WTC11 (cell line): ENCODE measurements at regions of chr19 and their contacts with region 1.

Region 1: GRCh38 chr19:1825909-1826556 is 14.0 kb upstream of the ATP8B3 start:
- DNase-seq: peak; percentile 93
- ATAC-seq: peak; percentile 81
- H3K4me3 Mint-ChIP-seq: no peak overlapping the region
- H3K27ac Mint-ChIP-seq: peak overlapping the region; percentile 92
- H3K4me1 Mint-ChIP-seq: peaks cover 6% of the 10 kb centered on the region; the same call in 1 of the 2 replicates
- H3K27me3 Mint-ChIP-seq: no peaks in the 10 kb centered on the region
- CTCF ChIP-seq: peak; percentile 85

Region 2: GRCh38 chr19:1551068-1552040 is 274.7 kb before region 1 on chr19:
- CTCF ChIA-PET with region 1: interaction called, 31 read pairs
- POLR2A ChIA-PET with region 1: no interaction called
- DNase-seq: no peak
- ATAC-seq: no peak
- H3K4me3 Mint-ChIP-seq: no peak overlapping the region
- H3K27ac Mint-ChIP-seq: no peak overlapping the region
- H3K4me1 Mint-ChIP-seq: no peaks in the 10 kb centered on the region
- H3K27me3 Mint-ChIP-seq: peaks cover 3% of the 10 kb centered on the region; the same call in 1 of the 2 replicates
- CTCF ChIP-seq: no peak

Region 3: GRCh38 chr19:1760020-1760419 is 66.0 kb before region 1 on chr19:
- CTCF ChIA-PET with region 1: interaction called, 10 read pairs
- POLR2A ChIA-PET with region 1: no interaction called
- DNase-seq: no peak
- ATAC-seq: peak; percentile 27
- H3K4me3 Mint-ChIP-seq: no peak overlapping the region; the same call in 1 of the 2 replicates
- H3K27ac Mint-ChIP-seq: no peak overlapping the region
- H3K4me1 Mint-ChIP-seq: peaks cover 15% of the 10 kb centered on the region
- H3K27me3 Mint-ChIP-seq: peaks cover 100% of the 10 kb centered on the region
- CTCF ChIP-seq: no peak

Region 4: DNA sequence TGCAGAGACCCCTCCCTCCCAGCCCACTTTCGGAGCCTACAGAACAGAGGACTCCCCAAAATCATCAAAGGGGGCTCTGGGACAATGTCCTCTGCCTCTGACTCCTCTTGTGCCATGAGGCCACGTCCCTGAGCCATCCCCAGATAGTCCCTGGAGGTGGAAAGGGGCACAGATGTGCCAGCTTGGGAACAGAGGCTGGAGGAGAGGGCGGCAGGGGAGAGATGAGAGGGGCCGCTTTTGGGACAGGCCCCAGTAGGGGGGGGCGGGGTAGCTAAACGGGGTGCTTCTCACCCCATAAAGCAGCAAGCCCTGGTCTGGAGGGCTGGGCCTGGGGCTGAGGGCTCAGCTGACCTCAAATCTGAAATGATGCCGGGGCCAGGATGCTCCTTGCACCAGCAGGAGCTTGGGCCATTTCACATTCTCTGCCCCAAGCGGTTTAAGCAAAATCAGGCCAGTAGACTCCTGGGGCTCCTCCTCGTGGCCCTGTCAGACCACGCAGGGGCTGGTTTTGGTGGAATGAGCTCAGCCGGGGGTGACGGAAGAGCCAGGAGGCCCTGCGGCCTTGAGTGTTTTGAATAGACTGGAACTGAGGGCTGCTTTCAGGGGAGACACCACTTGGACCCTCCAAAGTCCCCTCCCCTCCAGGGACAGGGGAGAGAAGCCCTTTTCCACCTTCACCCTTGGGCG is 45.6 kb before region 1 on chr19:
- CTCF ChIA-PET with region 1: interaction called, 53 read pairs
- POLR2A ChIA-PET with region 1: no interaction called
- DNase-seq: no peak
- ATAC-seq: no peak
- H3K4me3 Mint-ChIP-seq: no peak overlapping the region
- H3K27ac Mint-ChIP-seq: no peak overlapping the region
- H3K4me1 Mint-ChIP-seq: peaks cover 16% of the 10 kb centered on the region
- H3K27me3 Mint-ChIP-seq: peaks cover 86% of the 10 kb centered on the region
- CTCF ChIP-seq: no peak

Region 5: GRCh38 chr19:1812469-1813196 is 13.4 kb before region 1 on chr19:
- CTCF ChIA-PET with region 1: interaction called, 45 read pairs
- POLR2A ChIA-PET with region 1: no interaction called
- DNase-seq: peak; percentile 97
- ATAC-seq: peak; percentile 88
- H3K4me3 Mint-ChIP-seq: peak overlapping the region; percentile 87
- H3K27ac Mint-ChIP-seq: peak overlapping the region; percentile 95
- H3K4me1 Mint-ChIP-seq: peaks cover 5% of the 10 kb centered on the region; the same call in 1 of the 2 replicates
- H3K27me3 Mint-ChIP-seq: peaks cover 4% of the 10 kb centered on the region
- CTCF ChIP-seq: peak; percentile 43; the same call in 1 of the 2 replicates

Region 6: DNA sequence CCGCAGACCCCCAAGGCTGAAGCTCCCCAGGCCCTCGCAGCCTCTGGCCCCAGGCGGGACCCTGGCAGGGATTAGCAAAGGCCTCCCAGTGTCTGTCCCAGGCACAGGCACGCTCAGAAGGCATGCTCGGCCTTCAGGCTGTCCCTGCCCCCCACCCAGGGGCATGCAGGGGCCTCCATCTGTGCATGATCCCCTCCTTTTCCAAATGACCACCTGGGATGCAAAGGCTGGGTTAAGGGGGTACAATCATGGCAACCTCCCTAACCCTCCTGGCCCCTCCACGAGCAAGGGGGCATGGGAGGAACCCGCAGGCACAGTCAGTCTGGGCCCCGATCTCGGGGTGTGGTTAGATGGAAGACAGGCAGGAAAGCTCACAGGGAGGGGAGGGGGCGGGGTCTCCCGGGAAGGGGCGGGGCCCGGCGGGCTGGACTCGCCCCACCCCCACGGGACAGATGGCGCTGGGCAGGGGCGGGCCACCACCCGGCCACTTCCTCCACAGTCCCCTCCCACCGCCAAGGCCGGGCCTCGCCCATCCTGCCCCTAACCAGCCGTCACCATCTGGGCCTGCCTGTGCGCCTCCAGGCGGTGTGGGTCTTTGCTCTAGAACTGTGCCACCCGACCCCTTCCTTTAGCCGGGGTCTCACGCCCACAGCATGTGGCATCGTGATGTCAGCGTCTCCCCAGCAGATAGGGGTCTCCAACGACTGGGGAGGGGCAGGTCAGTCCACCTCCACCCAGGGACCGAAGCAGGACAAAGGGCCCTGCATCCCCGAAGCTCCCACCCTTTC is 29.2 kb after region 1 on chr19:
- CTCF ChIA-PET with region 1: interaction called, 57 read pairs
- POLR2A ChIA-PET with region 1: no interaction called
- DNase-seq: peak; percentile 93
- ATAC-seq: peak; percentile 80
- H3K4me3 Mint-ChIP-seq: peak overlapping the region; percentile 63
- H3K27ac Mint-ChIP-seq: peak overlapping the region; percentile 91
- H3K4me1 Mint-ChIP-seq: peaks cover 48% of the 10 kb centered on the region
- H3K27me3 Mint-ChIP-seq: no peaks in the 10 kb centered on the region; the same call in 1 of the 2 replicates
- CTCF ChIP-seq: no peak

Region 7: DNA sequence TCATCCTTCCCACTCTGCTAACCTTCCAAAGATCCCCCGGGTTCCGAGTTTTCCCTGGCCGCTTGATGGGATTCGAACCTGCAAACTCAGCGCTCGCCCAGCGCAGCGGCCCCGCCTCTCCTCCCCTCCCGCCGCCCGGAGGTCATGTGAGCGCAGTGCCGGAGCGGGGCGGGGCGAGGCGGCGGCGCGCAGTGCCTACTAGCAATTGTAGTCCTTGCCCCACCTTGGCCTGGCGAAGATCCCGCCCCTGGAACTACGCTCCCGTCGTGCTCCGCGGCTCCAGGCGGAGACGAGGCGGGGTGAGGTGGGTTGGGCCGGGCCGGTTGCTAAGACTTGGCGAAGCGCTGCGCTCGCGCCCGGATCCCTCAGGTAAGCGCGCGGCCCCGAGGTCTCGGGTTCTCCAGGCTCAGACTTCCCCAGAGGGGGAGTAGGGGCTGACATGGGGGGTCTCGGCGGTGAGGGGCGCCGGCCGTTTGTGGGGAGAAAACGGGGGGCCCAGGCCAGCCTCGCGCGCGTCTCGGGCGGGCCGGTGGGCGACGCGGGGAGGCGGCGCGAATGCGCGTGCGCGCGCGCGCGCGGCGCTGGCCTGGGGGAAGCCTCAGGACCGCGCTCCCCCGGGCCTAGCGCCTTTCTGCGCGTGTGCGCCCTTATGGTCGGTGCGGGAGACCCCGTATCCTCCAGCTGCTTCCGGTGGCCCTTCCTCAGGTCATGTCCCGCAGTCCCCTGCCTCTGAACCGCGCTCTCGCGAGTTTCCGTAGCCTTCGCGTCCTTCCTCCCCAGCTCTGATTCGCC is 79.2 kb after region 1 on chr19 and contains the starts of genes ADAT3 and SCAMP4:
- CTCF ChIA-PET with region 1: interaction called, 11 read pairs
- POLR2A ChIA-PET with region 1: no interaction called
- DNase-seq: peak; percentile 100
- ATAC-seq: peak; percentile 96
- H3K4me3 Mint-ChIP-seq: peak within 1 kb of the TSS; percentile 80
- H3K27ac Mint-ChIP-seq: peak within 1 kb of the TSS; percentile 95
- H3K4me1 Mint-ChIP-seq: peaks cover 17% of the 10 kb centered on the region
- H3K27me3 Mint-ChIP-seq: no peaks in the 10 kb centered on the region
- CTCF ChIP-seq: no peak
- total RNA-seq, gene ADAT3: 15.0 to 20.3 TPM (median 15.9 TPM) in 3 replicates
- total RNA-seq, gene SCAMP4: 81.3 to 86.1 TPM (median 86.1 TPM) in 3 replicates